K562 (cell line): ENCODE measurements at regions of chr19 and their contacts with region 1.

Region 1: DNA sequence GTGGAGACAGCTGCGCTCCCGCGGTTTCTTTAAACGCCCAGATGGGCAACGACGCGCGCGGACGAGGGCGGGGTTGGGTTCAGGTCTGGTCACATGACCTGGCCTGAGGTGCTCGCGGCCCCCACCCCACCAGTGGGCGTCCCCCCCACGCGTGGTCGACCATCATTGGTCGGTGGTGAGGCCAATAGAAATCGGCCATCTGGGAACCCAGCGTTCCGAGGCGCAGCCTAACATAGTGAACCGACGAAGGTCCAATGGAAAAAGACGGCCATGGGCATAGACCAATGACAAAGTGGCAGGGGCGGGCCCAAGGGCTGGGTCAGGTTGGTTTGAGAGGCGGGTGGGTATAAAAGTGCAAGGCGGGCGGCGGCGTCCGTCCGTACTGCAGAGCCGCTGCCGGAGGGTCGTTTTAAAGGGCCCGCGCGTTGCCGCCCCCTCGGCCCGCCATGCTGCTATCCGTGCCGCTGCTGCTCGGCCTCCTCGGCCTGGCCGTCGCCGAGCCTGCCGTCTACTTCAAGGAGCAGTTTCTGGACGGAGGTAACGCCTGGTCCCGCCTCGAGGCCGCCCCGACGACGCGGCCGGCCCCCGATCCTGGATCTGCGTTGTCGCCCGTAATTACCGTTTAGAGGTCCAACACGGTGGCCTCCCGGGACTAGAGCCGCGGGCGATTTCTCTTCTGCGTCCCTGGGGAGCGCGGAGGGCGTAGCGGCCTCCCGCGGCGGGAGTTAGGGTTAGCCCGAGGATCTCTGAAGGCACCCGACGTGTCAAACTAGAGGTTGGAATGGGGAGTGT is at the start of gene CALR:
- DNase-seq: peak; percentile 92 to 100 (median 96)
- ATAC-seq: peak; percentile 93
- H3K4me3 ChIP-seq: peak within 1 kb of the TSS; percentile 90
- H3K27ac ChIP-seq: peak within 1 kb of the TSS; percentile 94
- H3K4me1 ChIP-seq: peaks cover 36 to 46% of the 10 kb centered on the region in 2 experiments
- H3K27me3 ChIP-seq: no peaks in the 10 kb centered on the region
- CTCF ChIP-seq: peak in 2 of 3 experiments; percentile 42 to 65; a peak in 5 of 6 replicates
- EP300 ChIP-seq: no peak
- POLR2A ChIP-seq: peak; percentile 99
- RAD21 ChIP-seq: 0 out of 4 replicates have a peak, but pooled peaks of 1 of the 2 experiments have one; percentile 11
- polyA plus RNA-seq, gene CALR: 126 to 147 TPM

Region 2: GRCh38 chr19:11913680-11914079 is 1024.8 kb before region 1 on chr19:
- CTCF ChIA-PET with region 1: no interaction called
- POLR2A ChIA-PET with region 1: no interaction called
- in situ Hi-C with region 1: no loop called
- intact Hi-C with region 1: no loop called
- DNase-seq: no peak
- ATAC-seq: no peak
- H3K4me3 ChIP-seq: no peak overlapping the region
- H3K27ac ChIP-seq: no peak overlapping the region; the same call in 2 of the 3 replicates
- H3K4me1 ChIP-seq: peaks cover 0 to 2% of the 10 kb centered on the region in 2 experiments; a peak in 2 of 5 replicates
- H3K27me3 ChIP-seq: no peaks in the 10 kb centered on the region
- CTCF ChIP-seq: no peak
- EP300 ChIP-seq: no peak
- POLR2A ChIP-seq: no peak
- RAD21 ChIP-seq: no peak

Region 3: DNA sequence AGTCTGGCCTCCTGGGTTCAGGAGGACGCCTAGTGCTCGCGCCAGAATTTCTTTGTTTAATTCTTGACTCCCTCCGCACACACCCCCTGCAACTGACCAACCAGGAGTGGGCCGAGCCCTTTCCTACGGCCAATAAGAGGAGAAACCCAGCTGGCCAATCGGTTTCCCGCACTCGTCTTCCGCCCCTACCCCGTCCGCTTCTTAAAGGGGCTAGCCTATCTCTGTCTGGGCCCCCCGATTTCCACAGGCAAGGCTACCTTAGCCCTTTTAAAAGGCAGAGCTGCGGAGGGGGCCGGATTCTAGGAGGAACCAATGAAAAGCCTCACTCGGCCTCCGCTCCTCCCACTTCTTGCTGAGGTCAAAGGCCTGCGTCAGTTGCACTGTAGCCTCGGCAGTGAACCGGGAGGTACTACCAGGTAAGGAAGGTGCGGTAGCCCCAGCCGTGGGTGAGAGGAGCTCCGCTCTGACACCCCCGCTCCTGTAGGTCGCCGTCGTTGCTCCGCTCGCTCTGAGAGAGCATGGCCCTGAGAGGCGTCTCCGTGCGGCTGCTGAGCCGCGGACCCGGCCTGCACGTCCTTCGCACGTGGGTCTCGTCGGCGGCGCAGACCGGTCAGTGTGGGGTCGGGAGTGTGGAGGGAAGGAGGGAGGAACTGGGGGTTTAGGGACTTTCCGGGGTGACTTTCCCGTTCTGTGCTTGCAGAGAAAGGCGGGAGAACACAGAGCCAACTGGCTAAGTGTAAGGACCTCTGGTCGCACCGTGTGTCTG is 47.5 kb before region 1 on chr19 and contains the start of gene GCDH:
- CTCF ChIA-PET with region 1: no interaction called
- POLR2A ChIA-PET with region 1: interaction called, 11 read pairs
- in situ Hi-C with region 1: no loop called
- intact Hi-C with region 1: loop called (anchors 5 kb)
- DNase-seq: peak; percentile 90 to 99 (median 95)
- ATAC-seq: peak; percentile 91
- H3K4me3 ChIP-seq: peak within 1 kb of the TSS; percentile 88
- H3K27ac ChIP-seq: peak within 1 kb of the TSS; percentile 68
- H3K4me1 ChIP-seq: peaks cover 15 to 50% of the 10 kb centered on the region in 2 experiments; a peak in 4 of 5 replicates
- H3K27me3 ChIP-seq: no peaks in the 10 kb centered on the region
- CTCF ChIP-seq: peak in 2 of 3 experiments; percentile 20 to 47; a peak in 2 of 6 replicates
- EP300 ChIP-seq: 0 out of 2 replicates have a peak, but pooled peaks have one; percentile 13
- POLR2A ChIP-seq: peak; percentile 82
- RAD21 ChIP-seq: 0 out of 4 replicates have a peak, but pooled peaks of 1 of the 2 experiments have one; percentile 34
- polyA plus RNA-seq, gene GCDH: 2.9 to 5.5 TPM

Region 4: GRCh38 chr19:12921047-12921446 is 17.4 kb before region 1 on chr19:
- CTCF ChIA-PET with region 1: no interaction called
- POLR2A ChIA-PET with region 1: interaction called, 10 read pairs
- in situ Hi-C with region 1: no loop called
- intact Hi-C with region 1: no loop called
- DNase-seq: no peak
- ATAC-seq: no peak
- H3K4me3 ChIP-seq: no peak overlapping the region
- H3K27ac ChIP-seq: peak overlapping the region; percentile 25; the same call in 1 of the 3 replicates
- H3K4me1 ChIP-seq: peaks cover 4 to 31% of the 10 kb centered on the region in 2 experiments; a peak in 3 of 5 replicates
- H3K27me3 ChIP-seq: no peaks in the 10 kb centered on the region
- CTCF ChIP-seq: no peak
- EP300 ChIP-seq: no peak
- POLR2A ChIP-seq: peak; percentile 57
- RAD21 ChIP-seq: no peak